ENCODE measurements at regions of chr15 and their contacts with region 1.

Region 1: GRCh38 chr15:88800026-88800425 is 3.2 kb upstream of the ACAN start:
- DNase-seq: peak; percentile 83
- H3K4me3 Mint-ChIP-seq: no peak overlapping the region
- H3K27ac Mint-ChIP-seq: no peak overlapping the region
- H3K4me1 Mint-ChIP-seq: peaks cover 12% of the 10 kb centered on the region
- H3K27me3 Mint-ChIP-seq: peaks cover 27% of the 10 kb centered on the region
- CTCF ChIP-seq: no peak

Region 2: GRCh38 chr15:88834211-88834812 is 34.3 kb after region 1 on chr15:
- CTCF ChIA-PET with region 1: no interaction called
- POLR2A ChIA-PET with region 1: no interaction called
- intact Hi-C with region 1: no loop called
- DNase-seq: peak; percentile 30
- H3K4me3 Mint-ChIP-seq: no peak overlapping the region
- H3K27ac Mint-ChIP-seq: no peak overlapping the region
- H3K4me1 Mint-ChIP-seq: peaks cover 9% of the 10 kb centered on the region
- H3K27me3 Mint-ChIP-seq: no peaks in the 10 kb centered on the region
- CTCF ChIP-seq: peak; percentile 49

Region 3: GRCh38 chr15:88897456-88898194 is 97.6 kb after region 1 on chr15:
- CTCF ChIA-PET with region 1: interaction called, 6 read pairs
- POLR2A ChIA-PET with region 1: interaction called, 5 read pairs
- intact Hi-C with region 1: loop called (anchors 10 kb)
- DNase-seq: peak; percentile 79
- H3K4me3 Mint-ChIP-seq: no peak overlapping the region
- H3K27ac Mint-ChIP-seq: peak overlapping the region; percentile 46
- H3K4me1 Mint-ChIP-seq: peaks cover 19% of the 10 kb centered on the region
- H3K27me3 Mint-ChIP-seq: no peaks in the 10 kb centered on the region
- CTCF ChIP-seq: peak; percentile 45